Posterior cingulate gyrus (tissue), 11 donors: ENCODE measurements at regions of chr6 and their contacts with region 1.

Region 1: GRCh38 chr6:155248008-155249001 is 15.5 kb upstream of the CLDN20 start:
- DNase-seq: peak; percentile 53 to 95 (median 66)

Region 2: GRCh38 chr6:154868143-154868594 is 380.1 kb before region 1 on chr6:
- intact Hi-C with region 1: loop called (anchors 10 kb)
- DNase-seq: no peak

Region 3: GRCh38 chr6:154928325-154928922 is 319.9 kb before region 1 on chr6:
- intact Hi-C with region 1: loop called (anchors 1 kb)
- DNase-seq: peak in 5 of 10 donors; percentile 33 to 65 (median 57)

Region 4: DNA sequence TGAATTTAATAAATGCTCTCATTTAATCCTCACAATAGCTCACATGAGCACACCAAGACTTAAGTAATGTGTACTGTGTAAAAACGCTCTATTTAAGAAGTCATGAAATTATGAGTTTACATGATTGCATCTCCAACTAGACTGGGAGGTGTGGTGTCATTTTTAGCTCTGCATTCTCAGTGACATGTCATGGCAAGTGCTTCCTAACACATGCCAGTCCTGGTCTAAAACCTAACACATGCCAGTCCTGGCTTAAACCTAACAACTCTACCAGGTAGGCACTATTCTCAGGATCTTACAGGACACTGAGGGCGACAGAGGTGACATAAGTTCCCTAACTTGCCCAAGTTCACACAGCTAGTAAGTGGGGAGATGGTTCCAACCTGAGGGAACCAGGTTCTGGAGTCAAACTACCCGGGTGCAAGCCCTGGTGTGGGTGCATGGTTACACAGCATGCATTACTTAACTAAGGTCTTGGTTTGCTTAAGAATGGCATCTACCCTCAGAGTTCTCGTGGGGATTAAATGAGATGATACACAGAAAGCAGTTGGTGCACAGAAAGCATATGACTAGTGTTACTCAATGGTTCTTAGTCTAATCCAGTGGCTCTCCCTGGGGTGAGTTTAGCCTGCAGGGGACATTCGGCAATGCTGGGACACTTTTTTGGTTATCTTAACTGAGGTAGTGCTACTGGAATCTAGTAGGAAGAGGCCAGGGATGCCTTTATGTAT is 30.2 kb after region 1 on chr6:
- intact Hi-C with region 1: no loop called
- DNase-seq: no peak